A549 (cell line): ENCODE measurements at regions of chr7 and their contacts with region 1.

Region 1: DNA sequence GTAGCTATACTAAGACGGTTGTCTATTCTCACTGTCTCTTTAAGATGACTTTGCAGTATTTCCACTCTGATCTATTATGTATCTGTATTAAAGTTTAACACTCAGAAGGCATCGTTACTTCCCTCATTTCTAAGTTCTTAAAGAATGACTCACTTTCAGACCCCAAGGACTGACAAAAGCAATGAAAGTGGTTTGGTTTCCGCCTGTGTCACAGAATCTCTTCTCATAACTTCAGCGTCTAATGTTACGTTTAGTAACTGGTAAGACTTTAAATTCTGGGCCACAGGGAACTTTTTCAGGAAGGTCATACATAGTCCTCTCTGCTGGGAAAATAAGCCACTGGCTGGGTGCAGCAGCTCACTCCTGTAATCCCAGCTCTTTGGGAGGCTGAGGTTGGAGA is 892.0 kb upstream of the AUTS2 start:
- DNase-seq: peak; percentile 81 to 98
- ATAC-seq: peak; percentile 96 to 97
- H3K4me3 ChIP-seq: no peak overlapping the region
- H3K27ac ChIP-seq: peak overlapping the region; percentile 91 to 98
- H3K4me1 ChIP-seq: peaks cover 27% of the 10 kb centered on the region
- CTCF ChIP-seq: no peak
- EP300 ChIP-seq: peak; percentile 85 to 92; a peak in 4 of 5 replicates
- POLR2A ChIP-seq: no peak
- RAD21 ChIP-seq: peak; percentile 41 to 77

Region 2: GRCh38 chr7:68800316-68800715 is 94.0 kb after region 1 on chr7:
- CTCF ChIA-PET with region 1: no interaction called
- POLR2A ChIA-PET with region 1: interaction called, 12 read pairs
- DNase-seq: peak in 1 of 2 experiments; percentile 33
- ATAC-seq: no peak
- H3K4me3 ChIP-seq: no peak overlapping the region
- H3K27ac ChIP-seq: peak overlapping the region; percentile 78 to 88
- H3K4me1 ChIP-seq: peaks cover 21% of the 10 kb centered on the region
- CTCF ChIP-seq: no peak
- EP300 ChIP-seq: no peak
- POLR2A ChIP-seq: no peak
- RAD21 ChIP-seq: no peak; a peak in 1 of 5 replicates

Region 3: GRCh38 chr7:68823996-68824780 is 117.9 kb after region 1 on chr7:
- CTCF ChIA-PET with region 1: no interaction called
- POLR2A ChIA-PET with region 1: no interaction called
- DNase-seq: no peak
- ATAC-seq: no peak
- H3K4me3 ChIP-seq: no peak overlapping the region
- H3K27ac ChIP-seq: no peak overlapping the region
- H3K4me1 ChIP-seq: 0 out of 3 replicates have a peak, but pooled peaks cover 3% of the 10 kb centered on the region
- CTCF ChIP-seq: no peak
- EP300 ChIP-seq: no peak
- POLR2A ChIP-seq: no peak
- RAD21 ChIP-seq: no peak